ENCODE measurements at regions of chr16 and their contacts with region 1.

Region 1: GRCh38 chr16:71461686-71462648 is at the start of gene ZNF23:
- DNase-seq: peak; percentile 61 to 79 (median 70)
- H3K4me3 ChIP-seq: peak within 1 kb of the TSS; percentile 88
- H3K4me3 Mint-ChIP-seq: peak within 1 kb of the TSS; percentile 87 to 99 (median 93)
- H3K27ac ChIP-seq: peak within 1 kb of the TSS; percentile 90
- H3K27ac Mint-ChIP-seq: peak within 1 kb of the TSS; percentile 86 to 99 (median 96)
- H3K4me1 ChIP-seq: peaks cover 9% of the 10 kb centered on the region
- H3K4me1 Mint-ChIP-seq: peaks cover 18 to 41% (median 32%) of the 10 kb centered on the region in 3 donors
- H3K27me3 ChIP-seq: no peaks in the 10 kb centered on the region
- H3K27me3 Mint-ChIP-seq: no peaks in the 10 kb centered on the region
- total RNA-seq, gene ZNF23: 9.2 to 9.4 TPM

Region 2: GRCh38 chr16:71484006-71484893 is 22.3 kb after region 1 on chr16:
- CTCF ChIA-PET with region 1: interaction called, 14 read pairs
- POLR2A ChIA-PET with region 1: interaction called, 14 read pairs
- DNase-seq: peak; percentile 67 to 87 (median 86)
- H3K4me3 ChIP-seq: peak overlapping the region; percentile 85
- H3K4me3 Mint-ChIP-seq: peak overlapping the region; percentile 81 to 93 (median 88)
- H3K27ac ChIP-seq: peak overlapping the region; percentile 96
- H3K27ac Mint-ChIP-seq: peak overlapping the region; percentile 80 to 97 (median 91)
- H3K4me1 ChIP-seq: peaks cover 11% of the 10 kb centered on the region
- H3K4me1 Mint-ChIP-seq: peaks cover 15 to 16% (median 15%) of the 10 kb centered on the region in 3 donors
- H3K27me3 ChIP-seq: no peaks in the 10 kb centered on the region
- H3K27me3 Mint-ChIP-seq: peaks cover 3% of the 10 kb centered on the region in 2 donors

Region 3: GRCh38 chr16:71524566-71525553 is 62.9 kb after region 1 on chr16:
- CTCF ChIA-PET with region 1: no interaction called
- POLR2A ChIA-PET with region 1: no interaction called
- DNase-seq: no peak
- H3K4me3 ChIP-seq: no peak overlapping the region
- H3K4me3 Mint-ChIP-seq: no peak overlapping the region
- H3K27ac ChIP-seq: no peak overlapping the region
- H3K27ac Mint-ChIP-seq: peak overlapping the region in 1 of 8 donors; percentile 44
- H3K4me1 ChIP-seq: no peaks in the 10 kb centered on the region
- H3K4me1 Mint-ChIP-seq: no peaks in the 10 kb centered on the region
- H3K27me3 ChIP-seq: no peaks in the 10 kb centered on the region
- H3K27me3 Mint-ChIP-seq: peaks cover 25 to 33% of the 10 kb centered on the region in 2 donors